ENCODE measurements at regions of chr15 and their contacts with region 1.

Region 1: DNA sequence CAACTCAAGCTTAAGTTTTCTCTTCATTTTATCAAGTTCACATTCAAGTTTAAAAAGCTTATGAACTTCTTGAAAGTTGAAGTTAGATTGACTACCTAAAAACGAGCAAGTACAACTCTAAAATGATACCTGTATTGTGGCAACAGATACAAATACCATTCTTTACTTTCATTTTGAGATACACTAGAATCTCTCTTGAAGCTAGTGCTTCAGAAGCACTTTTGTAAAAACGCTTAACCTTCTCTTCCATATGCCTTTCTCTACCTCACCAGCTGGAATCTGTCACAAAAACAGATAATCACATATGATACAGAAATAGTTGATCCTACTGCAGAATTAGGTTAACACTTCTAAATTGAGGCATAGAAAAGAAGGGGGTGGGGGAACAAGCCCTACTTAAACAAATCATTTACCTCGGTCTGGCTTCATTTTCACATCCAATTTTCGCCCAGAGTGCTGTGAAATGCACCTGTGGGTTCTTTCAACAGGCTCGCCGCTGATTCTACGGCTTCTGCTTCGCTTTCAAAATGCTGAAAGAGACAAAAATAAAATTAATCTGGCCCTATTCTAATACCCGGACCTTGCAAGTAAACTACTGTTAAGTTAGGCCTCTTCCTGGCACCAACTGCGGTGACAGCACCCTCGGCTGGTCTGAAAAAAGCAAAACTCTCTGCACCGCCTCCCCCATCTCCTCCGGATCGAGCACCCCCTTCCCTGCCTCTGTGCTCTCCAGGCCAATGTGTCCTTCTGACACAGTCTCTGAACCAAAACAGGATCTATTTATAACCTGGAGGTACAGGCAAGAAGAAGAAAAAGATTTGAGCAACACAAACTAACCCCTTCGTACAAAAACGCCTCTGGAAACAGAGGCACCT is 1.4 kb downstream of the ATOSA start:
- DNase-seq: peak; percentile 56 to 79 (median 69)
- H3K4me3 ChIP-seq: peak overlapping the region; percentile 87 to 95 (median 94)
- H3K27ac ChIP-seq: peak overlapping the region; percentile 93 to 97
- H3K4me1 ChIP-seq: peaks cover 24 to 38% (median 28%) of the 10 kb centered on the region in 4 experiments
- H3K27me3 ChIP-seq: no peaks in the 10 kb centered on the region

Region 2: GRCh38 chr15:52651114-52651513 is 26.7 kb before region 1 on chr15:
- CTCF ChIA-PET with region 1: no interaction called
- POLR2A ChIA-PET with region 1: no interaction called
- DNase-seq: no peak
- H3K4me3 ChIP-seq: peak overlapping the region in 1 of 7 experiments; percentile 63
- H3K27ac ChIP-seq: peak overlapping the region in 1 of 2 experiments; percentile 70
- H3K4me1 ChIP-seq: peaks cover 0 to 5% (median 3%) of the 10 kb centered on the region in 4 experiments
- H3K27me3 ChIP-seq: no peaks in the 10 kb centered on the region

Region 3: DNA sequence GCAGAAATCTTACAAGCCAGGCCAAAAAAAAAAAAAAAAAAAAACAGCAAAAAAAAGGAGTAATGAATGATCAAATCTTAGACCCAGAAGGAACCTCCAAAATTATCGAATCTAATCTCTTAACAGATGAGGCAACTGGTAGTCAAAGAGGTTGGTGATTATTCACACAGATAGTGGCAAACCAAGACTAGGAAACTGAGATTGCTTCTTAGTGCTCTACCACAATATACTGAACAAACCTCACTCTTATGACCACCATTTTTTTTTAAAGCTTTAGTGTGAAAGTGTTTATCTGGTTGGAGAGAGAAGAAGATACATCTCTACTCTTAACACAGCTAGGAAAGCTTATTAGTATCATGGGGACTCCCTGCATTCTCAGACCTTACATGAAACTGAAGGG is 15.9 kb before region 1 on chr15:
- CTCF ChIA-PET with region 1: interaction called, 11 read pairs
- POLR2A ChIA-PET with region 1: interaction called, 7 read pairs
- DNase-seq: no peak
- H3K4me3 ChIP-seq: no peak overlapping the region
- H3K27ac ChIP-seq: no peak overlapping the region
- H3K4me1 ChIP-seq: no peaks in the 10 kb centered on the region
- H3K27me3 ChIP-seq: no peaks in the 10 kb centered on the region

Measured in common myeloid progenitor, CD34-positive (primary cell).